ENCODE measurements at regions of chr3 and their contacts with region 1.

Region 1: GRCh38 chr3:187745201-187746058 is at the start of gene BCL6:
- DNase-seq: peak; percentile 93
- H3K4me3 ChIP-seq: peak within 1 kb of the TSS; percentile 53 to 75 (median 67)
- H3K27ac ChIP-seq: peak within 1 kb of the TSS; percentile 91 to 99 (median 98)
- H3K4me1 ChIP-seq: peaks cover 5 to 57% (median 41%) of the 10 kb centered on the region in 4 donors
- H3K27me3 ChIP-seq: no peaks in the 10 kb centered on the region
- CTCF ChIP-seq: no peak
- EP300 ChIP-seq: peak; percentile 96
- POLR2A ChIP-seq: peak; percentile 97
- total RNA-seq, gene BCL6: 18.7 to 65.5 (median 32.5) TPM

Region 2: DNA sequence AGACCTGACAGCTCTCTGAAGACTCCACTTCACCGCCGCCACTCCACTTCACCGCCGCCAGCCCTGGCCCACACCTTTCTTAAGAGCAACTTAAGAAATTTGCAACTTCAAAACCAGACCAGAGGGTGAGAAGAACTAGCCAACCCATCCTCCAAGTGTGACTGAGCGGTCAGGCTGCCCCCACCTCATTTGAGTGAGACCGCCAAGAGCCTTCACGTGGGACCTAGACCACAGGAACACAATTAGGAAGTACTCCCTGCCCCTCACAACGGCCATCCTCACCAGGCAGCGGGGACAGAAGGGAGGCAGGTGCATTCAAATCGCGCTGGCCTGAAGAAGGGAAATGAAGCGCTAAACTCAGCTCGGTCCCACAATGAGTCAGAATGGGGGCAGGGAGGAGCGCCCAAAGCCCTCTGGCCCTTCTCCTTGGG is 156.6 kb after region 1 on chr3:
- in situ Hi-C with region 1: no loop called
- intact Hi-C with region 1: loop called (anchors 10 kb)
- DNase-seq: no peak
- H3K4me3 ChIP-seq: no peak overlapping the region
- H3K27ac ChIP-seq: no peak overlapping the region
- H3K4me1 ChIP-seq: no peaks in the 10 kb centered on the region
- H3K27me3 ChIP-seq: no peaks in the 10 kb centered on the region
- CTCF ChIP-seq: no peak
- EP300 ChIP-seq: no peak
- POLR2A ChIP-seq: no peak

Region 3: DNA sequence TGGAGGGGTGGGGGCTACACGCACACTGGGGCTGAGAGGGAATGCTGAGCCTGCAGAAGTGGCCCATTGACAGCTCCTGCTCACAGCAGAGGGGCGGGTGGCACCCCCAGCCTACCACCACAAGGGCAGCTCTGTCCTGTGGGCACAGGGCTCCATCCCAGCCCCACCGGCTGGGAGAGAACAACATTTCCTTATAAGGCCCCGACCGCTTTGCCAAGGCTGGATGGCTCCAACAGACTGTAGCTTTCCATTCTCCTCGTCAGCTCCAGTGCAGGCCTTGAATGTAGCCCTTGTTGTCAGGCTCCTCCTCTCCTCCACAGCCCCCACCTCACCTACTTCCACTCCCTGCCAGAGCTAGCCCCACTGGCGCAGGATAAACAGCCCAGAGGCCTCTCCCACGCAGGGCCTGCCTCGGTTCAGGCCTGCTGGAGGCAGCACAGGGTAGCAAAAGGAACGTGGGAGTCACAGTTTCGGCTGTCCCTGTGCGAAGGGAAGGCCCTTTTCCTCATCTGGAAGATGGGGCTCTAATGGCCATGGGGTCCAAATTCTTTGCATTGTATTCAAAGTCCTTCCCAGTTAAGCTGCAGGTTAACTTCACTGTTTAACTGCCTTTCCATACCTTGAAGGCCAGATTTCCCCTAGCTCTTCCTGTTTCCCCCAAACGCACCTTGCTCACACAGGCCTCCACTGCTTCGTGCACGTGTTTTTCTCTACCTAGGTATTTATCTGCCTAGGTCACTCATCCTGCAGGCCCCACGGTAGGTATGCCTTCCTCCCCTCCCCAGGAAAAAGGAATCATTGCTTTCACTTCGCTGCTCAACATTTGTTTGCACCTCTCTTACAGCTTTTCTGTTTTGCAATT is 307.0 kb after region 1 on chr3:
- in situ Hi-C with region 1: loop called in 1 of 4 experiments (anchors 25 kb)
- intact Hi-C with region 1: loop called (anchors 5 kb)
- DNase-seq: peak; percentile 70
- H3K4me3 ChIP-seq: no peak overlapping the region
- H3K27ac ChIP-seq: peak overlapping the region; percentile 75 to 85 (median 80)
- H3K4me1 ChIP-seq: peaks cover 0 to 13% (median 11%) of the 10 kb centered on the region in 4 donors
- H3K27me3 ChIP-seq: no peaks in the 10 kb centered on the region
- CTCF ChIP-seq: peak; percentile 20 to 57 (median 30)
- EP300 ChIP-seq: peak; percentile 41
- POLR2A ChIP-seq: no peak

Region 4: GRCh38 chr3:188294823-188295487 is 549.5 kb after region 1 on chr3:
- in situ Hi-C with region 1: loop called in 3 of 4 experiments (anchors 25 kb)
- intact Hi-C with region 1: no loop called
- DNase-seq: no peak
- H3K4me3 ChIP-seq: no peak overlapping the region
- H3K27ac ChIP-seq: peak overlapping the region; percentile 75 to 81 (median 79)
- H3K4me1 ChIP-seq: peaks cover 26 to 80% (median 54%) of the 10 kb centered on the region in 4 donors
- H3K27me3 ChIP-seq: no peaks in the 10 kb centered on the region
- CTCF ChIP-seq: no peak
- EP300 ChIP-seq: peak; percentile 77
- POLR2A ChIP-seq: no peak

Region 5: GRCh38 chr3:188772886-188773285 is 1027.5 kb after region 1 on chr3:
- in situ Hi-C with region 1: loop called in 2 of 4 experiments (anchors 25 kb)
- intact Hi-C with region 1: no loop called
- DNase-seq: no peak
- H3K4me3 ChIP-seq: no peak overlapping the region
- H3K27ac ChIP-seq: peak overlapping the region in 1 of 4 donors; percentile 8
- H3K4me1 ChIP-seq: peaks cover 0 to 14% (median 6%) of the 10 kb centered on the region in 4 donors
- H3K27me3 ChIP-seq: no peaks in the 10 kb centered on the region
- CTCF ChIP-seq: no peak
- EP300 ChIP-seq: no peak
- POLR2A ChIP-seq: no peak

Region 6: DNA sequence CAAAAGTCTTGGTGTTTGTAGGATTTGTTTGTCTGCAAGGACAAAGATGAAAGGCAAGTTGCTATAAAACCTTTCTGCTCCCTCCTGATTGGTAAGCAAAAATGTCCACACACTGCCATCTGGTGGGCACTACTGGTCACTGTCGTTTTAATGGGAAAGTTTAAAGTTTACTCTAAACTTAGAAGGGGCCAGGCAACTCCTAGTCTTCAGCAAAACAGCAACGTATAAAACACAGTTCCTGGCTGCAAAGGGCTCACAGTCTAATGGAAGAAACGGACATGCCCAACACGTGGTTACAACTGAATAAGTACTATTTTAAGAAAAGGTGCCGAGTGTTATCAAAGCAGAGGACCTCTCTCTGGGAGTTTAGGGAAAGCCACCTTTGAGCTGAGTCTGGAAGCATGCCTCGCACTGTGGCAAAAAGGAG is 1402.7 kb after region 1 on chr3:
- in situ Hi-C with region 1: loop called in 1 of 4 experiments (anchors 25 kb)
- intact Hi-C with region 1: no loop called
- DNase-seq: peak; percentile 67
- H3K4me3 ChIP-seq: no peak overlapping the region
- H3K27ac ChIP-seq: no peak overlapping the region
- H3K4me1 ChIP-seq: peaks cover 0 to 7% (median 4%) of the 10 kb centered on the region in 4 donors
- H3K27me3 ChIP-seq: no peaks in the 10 kb centered on the region
- CTCF ChIP-seq: peak; percentile 80 to 83 (median 81)
- EP300 ChIP-seq: no peak
- POLR2A ChIP-seq: no peak

Measured in transverse colon (tissue), 4 donors.